ENCODE measurements at regions of chr16 and their contacts with region 1.

Region 1: GRCh38 chr16:49855280-49855821 is 561 bp downstream of the ZNF423 start:
- DNase-seq: peak; percentile 33
- H3K4me3 Mint-ChIP-seq: peak overlapping the region; percentile 69
- H3K27ac Mint-ChIP-seq: no peak overlapping the region
- H3K4me1 Mint-ChIP-seq: peaks cover 4% of the 10 kb centered on the region
- H3K27me3 Mint-ChIP-seq: peaks cover 71% of the 10 kb centered on the region
- CTCF ChIP-seq: no peak

Region 2: DNA sequence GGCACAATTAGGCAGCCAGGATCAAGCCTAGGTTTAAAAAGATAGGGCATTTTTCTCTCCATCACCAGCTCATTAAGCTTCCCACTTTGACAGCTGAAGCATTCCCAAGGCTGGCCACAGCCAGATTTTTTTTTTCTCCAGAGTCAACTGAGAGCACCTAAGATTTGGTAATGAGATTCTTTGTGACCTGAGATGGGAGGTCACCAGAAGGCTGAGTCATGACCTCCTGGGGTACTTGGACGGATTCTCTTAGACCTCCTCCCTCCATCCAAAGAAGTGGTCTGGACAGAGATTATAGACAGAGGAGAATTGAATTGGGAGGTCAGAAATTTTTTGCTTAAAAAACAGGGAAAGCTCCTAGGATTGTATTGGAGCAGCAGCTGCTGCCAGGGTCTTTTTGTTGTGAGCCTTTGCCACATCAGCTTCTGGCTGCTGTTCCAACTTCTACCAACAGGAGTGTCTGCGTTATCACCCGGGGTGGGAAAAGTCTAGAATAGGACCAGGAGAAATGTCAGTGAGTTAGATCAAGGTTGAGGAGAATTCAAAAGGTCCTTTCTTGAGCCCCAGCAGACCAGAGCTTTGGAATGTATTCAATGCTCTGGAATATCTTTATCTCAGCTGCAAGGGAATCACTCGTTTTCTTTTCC is 1024.2 kb before region 1 on chr16:
- CTCF ChIA-PET with region 1: no interaction called
- POLR2A ChIA-PET with region 1: no interaction called
- intact Hi-C with region 1: no loop called
- DNase-seq: peak; percentile 14
- H3K4me3 Mint-ChIP-seq: no peak overlapping the region
- H3K27ac Mint-ChIP-seq: no peak overlapping the region
- H3K4me1 Mint-ChIP-seq: no peaks in the 10 kb centered on the region
- H3K27me3 Mint-ChIP-seq: peaks cover 11% of the 10 kb centered on the region
- CTCF ChIP-seq: peak; percentile 11

Region 3: DNA sequence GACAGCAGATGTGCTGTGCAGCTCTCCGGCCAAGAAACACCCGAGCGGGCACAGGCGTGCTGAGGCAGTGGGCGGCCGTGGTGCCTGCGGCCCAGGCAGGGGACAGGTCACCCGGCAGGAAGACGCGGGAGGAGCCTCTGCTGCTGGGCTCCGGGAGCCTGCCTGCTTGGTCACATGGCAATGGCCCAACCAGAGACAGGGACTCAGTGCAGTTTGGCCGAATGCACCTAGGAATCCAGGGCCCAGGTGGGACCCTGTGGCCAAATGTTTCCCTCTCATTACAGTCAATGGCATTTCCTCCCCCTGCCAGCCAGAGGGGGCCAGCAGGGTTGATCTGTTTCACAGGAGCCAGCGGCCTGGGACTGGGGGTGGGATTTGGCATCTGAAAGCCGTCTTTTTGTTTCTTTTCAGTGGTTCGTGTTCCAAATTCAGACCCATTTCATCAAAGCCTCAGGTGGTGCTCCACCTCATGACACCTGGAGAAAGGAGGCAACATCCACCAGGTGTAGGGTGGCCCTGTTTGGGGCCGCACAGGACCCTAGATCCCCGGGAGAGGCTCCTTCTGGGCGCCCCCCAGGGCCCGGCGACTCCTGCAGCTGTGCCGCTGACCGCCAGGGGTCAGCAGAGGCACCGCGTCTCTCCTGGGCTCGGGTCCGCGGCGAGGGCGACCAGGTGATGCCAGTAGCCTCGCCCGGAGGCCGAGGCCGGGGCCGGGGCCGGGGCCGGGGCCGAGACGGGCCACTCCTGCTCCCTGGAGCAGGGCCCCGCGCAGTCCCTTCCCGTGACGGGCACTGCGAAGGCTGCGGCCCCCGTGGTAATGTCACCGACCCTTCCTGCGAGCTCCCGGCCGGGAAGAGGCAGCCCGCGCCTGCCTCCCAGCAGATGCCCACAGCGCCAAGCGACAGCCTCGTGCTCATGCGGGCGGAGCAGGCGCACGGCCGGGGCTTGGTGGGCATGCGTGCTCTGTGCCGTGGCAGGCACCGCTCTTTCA is 363.3 kb before region 1 on chr16:
- CTCF ChIA-PET with region 1: interaction called, 3 read pairs
- POLR2A ChIA-PET with region 1: no interaction called
- intact Hi-C with region 1: loop called (anchors 5 kb)
- DNase-seq: peak; percentile 22
- H3K4me3 Mint-ChIP-seq: peak overlapping the region; percentile 63
- H3K27ac Mint-ChIP-seq: no peak overlapping the region
- H3K4me1 Mint-ChIP-seq: no peaks in the 10 kb centered on the region
- H3K27me3 Mint-ChIP-seq: peaks cover 34% of the 10 kb centered on the region
- CTCF ChIP-seq: peak; percentile 81

Region 4: GRCh38 chr16:49608779-49609178 is 246.6 kb before region 1 on chr16:
- CTCF ChIA-PET with region 1: no interaction called
- POLR2A ChIA-PET with region 1: no interaction called
- intact Hi-C with region 1: loop called (anchors 5 kb)
- DNase-seq: no peak
- H3K4me3 Mint-ChIP-seq: no peak overlapping the region
- H3K27ac Mint-ChIP-seq: no peak overlapping the region
- H3K4me1 Mint-ChIP-seq: no peaks in the 10 kb centered on the region
- H3K27me3 Mint-ChIP-seq: peaks cover 99% of the 10 kb centered on the region
- CTCF ChIP-seq: peak; percentile 15

Region 5: DNA sequence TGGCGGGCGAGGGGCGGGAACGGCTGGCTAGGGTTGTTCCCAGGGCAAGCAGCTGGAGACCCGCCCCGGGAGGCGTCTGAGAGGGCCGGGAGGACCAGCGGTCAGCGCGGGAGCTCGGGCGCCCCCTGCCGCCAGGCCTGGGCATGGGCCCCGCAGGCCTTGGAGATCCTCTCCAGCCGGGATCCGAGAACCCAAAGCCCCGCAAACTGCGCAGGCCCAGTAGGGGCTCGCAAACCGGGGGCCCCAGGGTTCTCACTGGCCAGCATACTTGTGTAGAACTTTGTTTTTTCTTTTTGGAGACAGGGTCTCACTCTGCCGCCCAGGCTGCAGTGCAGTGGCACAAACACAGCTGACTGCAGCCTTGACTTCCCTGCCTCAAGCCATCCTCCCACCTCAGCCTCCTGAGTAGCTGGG is 21.4 kb after region 1 on chr16:
- CTCF ChIA-PET with region 1: interaction called, 13 read pairs
- POLR2A ChIA-PET with region 1: no interaction called
- intact Hi-C with region 1: no loop called
- DNase-seq: no peak
- H3K4me3 Mint-ChIP-seq: no peak overlapping the region
- H3K27ac Mint-ChIP-seq: no peak overlapping the region
- H3K4me1 Mint-ChIP-seq: no peaks in the 10 kb centered on the region
- H3K27me3 Mint-ChIP-seq: peaks cover 34% of the 10 kb centered on the region
- CTCF ChIP-seq: peak; percentile 64

Region 6: DNA sequence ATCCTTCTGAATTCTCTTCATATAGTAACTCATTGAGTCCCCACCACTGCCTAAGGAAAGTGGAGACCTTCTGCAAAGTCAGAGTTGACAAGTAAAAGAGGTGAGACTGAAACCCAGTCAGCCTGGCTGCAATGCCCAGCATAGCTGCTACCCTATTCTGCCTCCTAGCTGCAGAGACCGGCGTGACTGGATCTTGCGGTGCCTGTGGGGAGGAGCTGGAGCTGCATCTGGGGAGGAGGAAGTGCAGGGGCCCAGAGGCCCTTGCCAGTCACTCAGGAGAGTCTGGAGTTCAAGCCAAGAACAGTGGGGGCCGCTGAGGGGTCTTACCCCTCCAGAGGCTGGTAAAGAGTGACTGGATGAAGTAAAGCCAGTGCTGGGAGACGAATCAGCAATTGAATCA is 35.5 kb after region 1 on chr16:
- CTCF ChIA-PET with region 1: no interaction called
- POLR2A ChIA-PET with region 1: no interaction called
- intact Hi-C with region 1: no loop called
- DNase-seq: no peak
- H3K4me3 Mint-ChIP-seq: no peak overlapping the region
- H3K27ac Mint-ChIP-seq: no peak overlapping the region
- H3K4me1 Mint-ChIP-seq: no peaks in the 10 kb centered on the region
- H3K27me3 Mint-ChIP-seq: peaks cover 13% of the 10 kb centered on the region
- CTCF ChIP-seq: no peak

Measured in MCF 10A (cell line).